Common myeloid progenitor, CD34-positive (primary cell): ENCODE measurements at regions of chr16 and their contacts with region 1.

Region 1: DNA sequence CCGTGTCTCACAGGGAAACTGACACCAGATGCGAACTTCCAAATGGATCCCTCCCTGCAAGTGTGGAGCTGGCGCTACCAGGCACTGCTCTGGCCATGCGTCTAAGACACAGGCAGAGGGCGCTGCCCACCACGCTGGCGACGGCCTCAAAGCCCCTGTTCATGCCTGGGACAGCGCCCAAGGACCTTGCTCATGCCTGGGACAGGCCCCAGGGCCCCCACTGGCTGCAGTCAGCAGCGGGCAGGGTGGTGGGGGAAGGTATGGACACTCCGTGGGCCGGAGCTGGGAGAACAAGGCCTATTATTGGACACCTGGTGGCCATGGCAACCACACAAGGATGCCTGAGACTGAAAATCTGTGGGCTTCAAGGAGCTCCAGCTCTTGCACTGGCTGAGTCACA is 8.8 kb downstream of the ZG16B start:
- DNase-seq: peak; percentile 61 to 83 (median 76)
- H3K4me3 ChIP-seq: no peak overlapping the region
- H3K27ac ChIP-seq: no peak overlapping the region
- H3K4me1 ChIP-seq: peaks cover 0 to 31% (median 25%) of the 10 kb centered on the region in 4 experiments
- H3K27me3 ChIP-seq: no peaks in the 10 kb centered on the region

Region 2: GRCh38 chr16:2848933-2849725 is 10.2 kb after region 1 on chr16:
- CTCF ChIA-PET with region 1: interaction called, 21 read pairs
- POLR2A ChIA-PET with region 1: no interaction called
- DNase-seq: peak in 2 of 3 donors; percentile 36 to 46
- H3K4me3 ChIP-seq: no peak overlapping the region
- H3K27ac ChIP-seq: no peak overlapping the region
- H3K4me1 ChIP-seq: peaks cover 0 to 3% (median 0%) of the 10 kb centered on the region in 4 experiments
- H3K27me3 ChIP-seq: peaks cover 0 to 43% (median 12%) of the 10 kb centered on the region in 5 experiments

Region 3: DNA sequence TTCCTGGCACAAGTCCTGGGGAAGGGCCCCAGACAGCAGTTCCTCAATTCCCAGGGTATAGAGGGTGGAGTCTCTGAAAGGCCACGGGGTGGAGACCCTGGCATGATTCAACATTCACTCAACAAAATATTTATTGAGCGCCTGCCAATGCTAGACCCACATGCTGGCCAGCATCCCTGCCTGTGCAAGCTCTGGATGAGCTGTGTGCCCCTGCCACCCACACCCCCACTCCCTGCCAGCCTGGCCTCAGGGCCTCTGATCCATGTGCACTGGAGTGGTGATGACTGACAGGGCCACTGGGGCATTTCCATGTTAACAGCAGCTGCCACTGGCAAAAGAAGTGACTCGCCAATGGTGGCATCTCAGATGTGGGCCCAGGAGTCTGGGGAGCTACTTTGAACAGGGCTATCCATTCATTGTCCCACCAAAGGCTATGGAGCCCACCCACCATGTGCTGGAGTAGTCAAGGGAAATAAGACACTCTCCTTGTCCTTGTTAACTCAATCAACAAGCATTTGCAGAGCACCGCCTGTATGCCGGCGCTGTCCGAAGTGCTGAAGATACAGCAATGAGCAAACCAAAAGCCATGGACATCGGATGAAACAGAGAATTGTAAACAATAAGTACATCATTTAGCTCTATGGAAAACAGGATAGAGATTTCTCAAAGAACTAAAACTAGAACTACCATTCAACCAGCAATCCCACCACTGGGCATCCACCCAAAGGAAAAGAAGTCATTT is 22.1 kb after region 1 on chr16:
- CTCF ChIA-PET with region 1: interaction called, 46 read pairs
- POLR2A ChIA-PET with region 1: interaction called, 3 read pairs
- DNase-seq: peak in 1 of 3 donors; percentile 64
- H3K4me3 ChIP-seq: no peak overlapping the region
- H3K27ac ChIP-seq: no peak overlapping the region
- H3K4me1 ChIP-seq: peaks cover 0 to 17% (median 12%) of the 10 kb centered on the region in 4 experiments
- H3K27me3 ChIP-seq: peaks cover 0 to 40% (median 11%) of the 10 kb centered on the region in 5 experiments

Region 4: DNA sequence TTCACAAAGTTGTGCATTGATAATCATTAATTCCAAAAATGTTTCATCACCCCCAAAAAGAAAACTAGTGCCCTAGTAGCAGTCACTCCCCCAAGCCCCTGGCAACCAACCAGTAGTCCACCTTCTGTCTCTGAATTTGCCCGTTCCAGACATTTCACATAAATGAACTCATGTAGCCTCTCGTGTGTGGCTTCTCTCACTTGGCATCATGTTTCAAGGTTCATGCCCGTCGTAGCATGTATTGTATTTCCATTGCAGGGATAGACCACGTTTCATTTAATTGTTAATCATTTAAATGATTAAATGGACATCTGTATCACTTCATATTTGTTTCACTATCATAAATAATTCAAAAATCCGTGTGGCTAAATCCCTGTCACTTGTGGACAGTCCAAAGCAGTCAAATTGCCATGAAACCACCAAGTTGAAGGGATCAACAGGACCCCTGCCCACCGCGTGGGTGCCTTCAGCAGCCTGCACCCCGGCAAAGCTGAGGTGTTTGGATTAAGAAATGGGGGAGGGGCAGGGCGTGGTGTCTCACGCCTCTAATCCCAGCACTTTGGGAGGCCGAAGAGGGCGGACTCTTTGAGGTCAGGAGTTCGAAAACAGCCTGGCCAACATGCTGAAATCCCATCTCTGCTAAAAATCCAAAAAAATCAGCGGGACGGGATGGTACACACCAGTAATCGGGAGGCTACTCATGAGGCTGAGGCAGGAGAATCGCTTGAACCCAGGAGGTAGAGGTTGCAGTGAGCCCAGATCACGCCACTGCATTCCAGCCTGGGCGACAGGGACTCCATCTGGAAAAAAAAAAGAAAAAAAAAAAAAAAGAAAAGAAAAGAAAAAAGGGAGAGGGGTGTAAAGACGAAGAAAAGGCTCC is 35.3 kb after region 1 on chr16:
- CTCF ChIA-PET with region 1: interaction called, 21 read pairs
- POLR2A ChIA-PET with region 1: no interaction called
- DNase-seq: no peak
- H3K4me3 ChIP-seq: no peak overlapping the region
- H3K27ac ChIP-seq: no peak overlapping the region
- H3K4me1 ChIP-seq: peaks cover 0 to 6% (median 2%) of the 10 kb centered on the region in 4 experiments
- H3K27me3 ChIP-seq: no peaks in the 10 kb centered on the region